ENCODE measurements at regions of chr7 and their contacts with region 1.

Region 1: DNA sequence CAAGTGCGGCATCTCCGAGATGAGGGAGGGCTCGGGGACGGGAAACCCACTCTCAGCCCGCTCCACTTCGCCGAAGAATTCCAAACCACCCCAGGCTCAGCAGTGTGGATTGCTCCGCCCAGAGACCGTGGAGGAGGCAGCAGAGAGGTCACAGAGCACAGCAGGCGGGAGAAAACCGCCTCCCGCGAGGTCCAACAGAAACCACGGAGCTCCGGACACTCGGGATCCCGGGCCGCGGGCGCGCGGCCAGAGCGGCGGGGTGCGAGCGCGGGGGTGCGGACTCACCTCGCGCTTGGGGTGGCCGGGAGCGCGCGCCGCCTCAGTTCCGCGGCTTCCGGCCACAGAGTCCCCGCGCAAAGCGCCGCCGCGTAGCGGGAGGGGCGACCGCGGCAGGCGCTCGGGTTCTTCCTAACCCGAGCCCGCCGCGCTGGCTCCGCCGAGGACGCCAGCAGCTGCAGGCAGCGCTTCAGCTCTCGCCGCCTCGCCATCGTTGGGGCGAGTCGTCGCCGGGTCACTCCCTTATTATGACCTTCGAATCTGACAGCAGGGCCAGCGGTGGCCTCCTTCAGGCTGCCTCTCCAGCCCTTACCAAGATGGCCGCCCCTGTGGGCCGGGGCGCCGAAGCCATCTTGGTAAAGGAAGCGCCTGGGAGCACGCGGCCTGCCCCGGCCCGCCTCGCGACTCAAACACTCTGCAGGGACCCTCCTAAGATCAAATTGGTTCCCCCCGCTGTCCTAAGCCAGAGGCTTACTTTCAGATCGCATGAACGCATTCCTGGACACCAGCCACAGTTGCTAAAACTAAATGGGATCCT is at the start of gene NAPEPLD:
- DNase-seq: peak; percentile 60 to 82
- ATAC-seq: peak; percentile 92 to 95
- H3K4me3 ChIP-seq: peak within 1 kb of the TSS; percentile 69 to 94 (median 81)
- H3K27ac ChIP-seq: peak within 1 kb of the TSS; percentile 84 to 96 (median 92)
- H3K4me1 ChIP-seq: peaks cover 25 to 29% of the 10 kb centered on the region in 2 donors
- H3K27me3 ChIP-seq: no peaks in the 10 kb centered on the region
- CTCF ChIP-seq: peak in 1 of 5 experiments; percentile 15
- POLR2A ChIP-seq: peak; percentile 44 to 45
- total RNA-seq, gene NAPEPLD: 2.3 to 5.7 (median 4.0) TPM

Region 2: DNA sequence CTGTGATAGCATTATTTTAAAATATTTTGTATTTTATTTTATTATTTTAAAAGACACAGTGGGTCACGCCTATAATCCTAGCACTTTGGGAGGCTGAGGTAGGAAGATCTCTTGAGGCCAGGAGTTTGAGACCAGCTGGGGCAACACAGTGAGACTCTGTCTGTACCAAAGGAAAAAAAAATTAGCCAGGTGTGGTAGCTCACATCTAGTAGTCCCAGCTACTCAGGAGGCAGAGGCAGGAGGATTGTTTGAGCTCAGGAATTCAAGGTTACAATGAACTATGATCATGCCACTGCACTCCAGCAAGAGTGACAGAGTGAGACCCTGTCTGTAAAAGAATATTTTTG is 111.8 kb before region 1 on chr7:
- in situ Hi-C with region 1: no loop called
- intact Hi-C with region 1: no loop called
- DNase-seq: no peak
- ATAC-seq: no peak
- H3K4me3 ChIP-seq: no peak overlapping the region
- H3K27ac ChIP-seq: no peak overlapping the region
- H3K4me1 ChIP-seq: no peaks in the 10 kb centered on the region
- H3K27me3 ChIP-seq: no peaks in the 10 kb centered on the region
- CTCF ChIP-seq: no peak
- POLR2A ChIP-seq: no peak

Region 3: GRCh38 chr7:103059471-103059870 is 89.7 kb before region 1 on chr7:
- in situ Hi-C with region 1: no loop called
- intact Hi-C with region 1: no loop called
- DNase-seq: no peak
- ATAC-seq: no peak
- H3K4me3 ChIP-seq: no peak overlapping the region
- H3K27ac ChIP-seq: no peak overlapping the region
- H3K4me1 ChIP-seq: no peaks in the 10 kb centered on the region
- H3K27me3 ChIP-seq: no peaks in the 10 kb centered on the region
- CTCF ChIP-seq: no peak
- POLR2A ChIP-seq: no peak

Region 4: DNA sequence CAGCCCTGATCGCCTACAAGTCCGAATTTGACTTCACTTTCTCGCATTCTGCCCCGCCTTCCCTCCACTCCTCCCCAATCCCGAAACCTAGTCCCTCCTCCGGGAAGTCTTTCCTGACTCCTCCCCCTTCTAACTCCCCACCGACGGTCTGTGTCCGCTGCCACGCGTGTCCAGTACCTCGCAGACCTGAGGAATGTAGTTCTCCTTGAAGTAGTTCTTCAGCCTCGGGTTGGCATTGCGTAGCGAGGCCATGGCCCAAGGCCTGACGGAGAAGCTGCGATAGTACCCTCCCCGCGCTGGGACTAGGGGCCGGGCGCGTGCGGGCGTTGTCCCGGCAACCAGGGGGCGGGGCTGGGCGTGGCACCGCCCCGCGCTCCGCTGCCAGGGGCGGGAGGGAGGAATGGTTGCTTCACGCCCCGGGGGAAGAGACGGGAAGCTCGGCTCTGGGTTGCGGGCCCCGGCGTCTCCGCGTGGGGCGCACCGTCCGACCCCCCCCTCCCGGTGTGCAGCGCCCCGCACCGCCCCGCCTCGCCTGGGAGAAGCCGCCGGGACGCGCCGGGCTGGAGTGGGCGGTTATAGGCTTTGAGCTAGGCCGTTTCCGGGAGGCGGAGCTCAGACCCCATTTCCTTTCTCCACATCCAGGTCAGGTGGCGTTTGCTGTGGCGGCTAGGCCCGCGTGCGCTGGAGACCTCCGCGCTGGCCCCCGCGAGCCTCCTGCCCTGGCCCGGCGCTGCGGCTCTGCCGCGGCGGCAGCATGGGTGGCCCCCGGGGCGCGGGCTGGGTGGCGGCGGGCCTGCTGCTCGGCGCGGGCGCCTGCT is 74.5 kb before region 1 on chr7 and contains the starts of genes ARMC10 and FBXL13:
- in situ Hi-C with region 1: no loop called
- intact Hi-C with region 1: loop called (anchors 2 kb)
- DNase-seq: peak; percentile 82 to 88
- ATAC-seq: peak; percentile 93 to 95
- H3K4me3 ChIP-seq: peak within 1 kb of the TSS; percentile 75 to 99 (median 86)
- H3K27ac ChIP-seq: peak within 1 kb of the TSS; percentile 80 to 93 (median 86)
- H3K4me1 ChIP-seq: peaks cover 11 to 15% of the 10 kb centered on the region in 2 donors
- H3K27me3 ChIP-seq: no peaks in the 10 kb centered on the region
- CTCF ChIP-seq: peak in 4 of 5 experiments; percentile 18 to 61 (median 33)
- POLR2A ChIP-seq: peak; percentile 66 to 71
- total RNA-seq, gene ARMC10: 23.6 to 31.3 (median 27.2) TPM
- total RNA-seq, gene FBXL13: 0.26 TPM in 1 of 4 donors, not detected in the others

Region 5: GRCh38 chr7:103082497-103082896 is 66.7 kb before region 1 on chr7:
- in situ Hi-C with region 1: loop called in 1 of 4 experiments (anchors 10 kb)
- intact Hi-C with region 1: no loop called
- DNase-seq: no peak
- ATAC-seq: no peak
- H3K4me3 ChIP-seq: no peak overlapping the region
- H3K27ac ChIP-seq: no peak overlapping the region
- H3K4me1 ChIP-seq: no peaks in the 10 kb centered on the region
- H3K27me3 ChIP-seq: no peaks in the 10 kb centered on the region
- CTCF ChIP-seq: no peak
- POLR2A ChIP-seq: no peak